Dendritic cell treated with granulocyte-macrophage colony-stimulating factor and Interleukin-4, amounts not matched to agents 40 ng/mL and 50 ng/mL, for 4 days (primary cell): ENCODE measurements at regions of chr22 and their contacts with region 1.

Region 1: GRCh38 chr22:41589391-41590241 is at the start of gene PMM1:
- H3K4me3 Mint-ChIP-seq: peak within 1 kb of the TSS; percentile 92
- H3K27ac Mint-ChIP-seq: peak within 1 kb of the TSS; percentile 86
- H3K4me1 Mint-ChIP-seq: peaks cover 34% of the 10 kb centered on the region
- H3K27me3 Mint-ChIP-seq: peaks cover 1% of the 10 kb centered on the region

Region 2: GRCh38 chr22:41403532-41404318 is 185.9 kb before region 1 on chr22:
- intact Hi-C with region 1: loop called (anchors 10 kb)
- H3K4me3 Mint-ChIP-seq: no peak overlapping the region
- H3K27ac Mint-ChIP-seq: no peak overlapping the region
- H3K4me1 Mint-ChIP-seq: peaks cover 6% of the 10 kb centered on the region
- H3K27me3 Mint-ChIP-seq: no peaks in the 10 kb centered on the region

Region 3: DNA sequence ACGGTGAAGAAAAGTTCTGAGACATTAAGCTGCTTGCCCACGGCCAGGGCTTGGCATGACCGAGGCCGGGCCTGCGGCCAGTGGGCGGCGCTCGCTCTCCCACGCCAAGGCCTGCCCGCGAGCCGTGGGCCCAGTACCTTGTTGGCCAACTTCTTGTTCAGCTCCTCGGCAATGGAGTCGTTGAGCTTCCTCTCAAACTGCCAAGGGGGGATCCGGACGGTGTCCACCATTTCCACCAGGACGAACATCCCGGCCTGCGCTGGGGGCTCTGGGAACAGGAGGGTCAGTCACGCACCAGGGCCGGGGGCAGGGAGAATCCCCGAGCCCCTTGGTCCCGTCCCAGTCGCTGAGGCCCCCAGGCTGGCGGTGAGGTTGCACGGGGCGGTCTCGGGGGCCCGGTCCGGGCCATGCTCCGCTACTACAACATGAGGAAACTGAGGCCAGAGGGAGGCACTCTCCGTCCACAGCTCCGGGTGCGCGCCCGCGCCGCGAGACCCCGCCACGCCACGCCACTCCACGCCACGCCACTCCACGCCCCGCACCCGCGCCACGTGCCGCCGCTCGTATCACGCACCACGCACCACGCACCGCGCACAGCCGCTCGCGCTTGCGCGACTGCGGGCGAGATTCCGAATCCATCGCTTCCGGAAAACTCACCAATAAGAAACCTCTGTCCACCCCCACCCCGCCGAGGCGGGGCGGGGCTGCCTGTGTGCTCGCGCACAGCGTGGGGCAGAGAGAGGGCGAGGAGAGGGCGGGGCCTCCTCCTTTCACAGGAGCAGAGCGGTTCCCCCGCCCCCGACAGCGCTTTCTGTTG is 45.6 kb before region 1 on chr22 and contains the start of gene POLR3H:
- intact Hi-C with region 1: loop called (anchors 1 kb)
- H3K4me3 Mint-ChIP-seq: peak within 1 kb of the TSS; percentile 90
- H3K27ac Mint-ChIP-seq: peak within 1 kb of the TSS; percentile 89
- H3K4me1 Mint-ChIP-seq: peaks cover 44% of the 10 kb centered on the region
- H3K27me3 Mint-ChIP-seq: peaks cover 5% of the 10 kb centered on the region

Region 4: GRCh38 chr22:41621099-41621910 is 31.7 kb after region 1 on chr22 and contains the start of gene XRCC6:
- intact Hi-C with region 1: loop called (anchors 1 kb)
- H3K4me3 Mint-ChIP-seq: peak within 1 kb of the TSS; percentile 92
- H3K27ac Mint-ChIP-seq: peak within 1 kb of the TSS; percentile 94
- H3K4me1 Mint-ChIP-seq: peaks cover 39% of the 10 kb centered on the region
- H3K27me3 Mint-ChIP-seq: no peaks in the 10 kb centered on the region

Region 5: GRCh38 chr22:41832553-41833368 is 243.1 kb after region 1 on chr22 and contains the start of gene SREBF2:
- intact Hi-C with region 1: loop called (anchors 5 kb)
- H3K4me3 Mint-ChIP-seq: peak within 1 kb of the TSS; percentile 97
- H3K27ac Mint-ChIP-seq: peak within 1 kb of the TSS; percentile 99
- H3K4me1 Mint-ChIP-seq: peaks cover 65% of the 10 kb centered on the region
- H3K27me3 Mint-ChIP-seq: no peaks in the 10 kb centered on the region